Posterior vena cava (tissue), 2 donors: ENCODE measurements at regions of chr2 and their contacts with region 1.

Region 1: GRCh38 chr2:219041252-219041651 is at the start of gene CFAP65:
- DNase-seq: peak; percentile 68
- total RNA-seq, gene CFAP65: not detected

Region 2: DNA sequence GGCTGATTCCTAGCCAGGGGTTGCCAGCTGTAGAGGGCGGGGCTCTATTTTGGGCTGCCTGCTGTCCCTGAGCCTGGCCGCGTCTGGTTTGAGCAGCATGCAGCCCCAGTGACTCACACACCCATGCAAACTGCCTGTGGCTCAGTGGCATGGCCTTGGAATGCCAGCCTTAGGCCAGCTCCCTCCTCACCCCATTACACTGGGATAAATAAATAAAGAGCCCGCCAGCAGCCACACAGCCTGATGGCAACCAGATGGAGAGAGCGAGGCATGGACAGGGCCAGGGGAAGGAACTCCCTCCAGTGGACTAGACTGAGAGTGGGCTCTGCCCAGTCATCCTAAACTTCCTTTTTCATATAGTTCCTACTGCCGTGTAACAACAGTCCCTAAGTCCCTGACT is 101.1 kb after region 1 on chr2:
- intact Hi-C with region 1: no loop called
- DNase-seq: no peak

Region 3: GRCh38 chr2:219314804-219315468 is 273.7 kb after region 1 on chr2:
- intact Hi-C with region 1: loop called in 1 of 2 experiments (anchors 5 kb)
- DNase-seq: no peak